CD4-positive, alpha-beta T cell (primary cell): ENCODE measurements at regions of chr9 and their contacts with region 1.

Region 1: DNA sequence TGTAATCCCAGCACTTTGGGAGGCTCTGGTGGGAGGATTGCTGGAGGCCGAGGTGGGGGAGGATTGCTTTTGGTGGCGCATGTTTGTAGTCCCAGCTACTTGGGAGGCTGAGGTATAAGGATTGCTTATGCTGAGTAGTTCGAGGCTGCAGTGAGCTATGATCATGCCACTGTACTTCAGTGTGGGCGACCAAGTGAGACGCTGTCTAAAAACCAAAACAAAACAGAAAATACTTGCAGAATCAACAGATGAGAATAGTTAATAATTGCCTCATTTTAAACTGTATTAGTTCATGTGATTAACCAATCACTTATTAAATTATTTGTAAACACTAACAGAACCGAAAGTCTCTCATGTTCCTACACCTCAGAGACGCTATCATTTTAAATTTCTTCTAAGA is 118.0 kb downstream of the CCDC171 start:
- DNase-seq: no peak
- ATAC-seq: no peak
- H3K4me3 ChIP-seq: no peak overlapping the region
- H3K4me3 Mint-ChIP-seq: no peak overlapping the region
- H3K27ac ChIP-seq: no peak overlapping the region
- H3K27ac Mint-ChIP-seq: no peak overlapping the region
- H3K4me1 ChIP-seq: no peaks in the 10 kb centered on the region
- H3K4me1 Mint-ChIP-seq: no peaks in the 10 kb centered on the region
- H3K27me3 ChIP-seq: no peaks in the 10 kb centered on the region
- H3K27me3 Mint-ChIP-seq: no peaks in the 10 kb centered on the region
- CTCF ChIP-seq: no peak

Region 2: GRCh38 chr9:15403155-15403554 is 267.7 kb before region 1 on chr9:
- CTCF ChIA-PET with region 1: no interaction called
- POLR2A ChIA-PET with region 1: no interaction called
- intact Hi-C with region 1: no loop called
- DNase-seq: peak in 3 of 14 experiments; percentile 28 to 40 (median 38)
- ATAC-seq: peak; percentile 41
- H3K4me3 ChIP-seq: no peak overlapping the region
- H3K4me3 Mint-ChIP-seq: no peak overlapping the region
- H3K27ac ChIP-seq: no peak overlapping the region
- H3K27ac Mint-ChIP-seq: no peak overlapping the region
- H3K4me1 ChIP-seq: no peaks in the 10 kb centered on the region
- H3K4me1 Mint-ChIP-seq: no peaks in the 10 kb centered on the region
- H3K27me3 ChIP-seq: no peaks in the 10 kb centered on the region
- H3K27me3 Mint-ChIP-seq: no peaks in the 10 kb centered on the region
- CTCF ChIP-seq: no peak

Region 3: GRCh38 chr9:15622318-15622971 is 48.4 kb before region 1 on chr9:
- CTCF ChIA-PET with region 1: no interaction called
- POLR2A ChIA-PET with region 1: no interaction called
- intact Hi-C with region 1: no loop called
- DNase-seq: no peak
- ATAC-seq: no peak
- H3K4me3 ChIP-seq: no peak overlapping the region
- H3K4me3 Mint-ChIP-seq: no peak overlapping the region
- H3K27ac ChIP-seq: no peak overlapping the region
- H3K27ac Mint-ChIP-seq: no peak overlapping the region
- H3K4me1 ChIP-seq: no peaks in the 10 kb centered on the region
- H3K4me1 Mint-ChIP-seq: no peaks in the 10 kb centered on the region
- H3K27me3 ChIP-seq: no peaks in the 10 kb centered on the region
- H3K27me3 Mint-ChIP-seq: no peaks in the 10 kb centered on the region
- CTCF ChIP-seq: no peak

Region 4: DNA sequence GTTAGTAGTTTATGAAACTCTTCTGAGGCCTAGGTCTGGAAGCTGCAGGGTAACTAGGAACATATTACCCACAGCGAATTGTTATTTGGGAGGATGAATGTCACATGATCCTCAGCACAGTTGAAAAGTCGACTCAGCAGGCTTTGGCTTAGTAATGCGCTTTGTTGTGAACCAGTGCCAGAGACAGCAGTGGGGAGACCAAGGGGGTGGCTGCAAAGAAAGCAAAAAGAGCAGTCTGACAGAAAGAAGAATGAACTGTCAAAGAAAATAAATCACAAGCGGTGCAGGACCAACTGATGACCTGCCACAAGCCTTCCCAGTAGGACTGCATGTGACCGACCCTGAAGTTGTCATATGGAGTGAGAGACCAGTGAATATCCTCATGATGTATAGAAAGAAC is 52.0 kb after region 1 on chr9:
- CTCF ChIA-PET with region 1: no interaction called
- POLR2A ChIA-PET with region 1: no interaction called
- intact Hi-C with region 1: loop called in 1 of 2 experiments (anchors 10 kb)
- DNase-seq: no peak
- ATAC-seq: no peak
- H3K4me3 ChIP-seq: no peak overlapping the region
- H3K4me3 Mint-ChIP-seq: no peak overlapping the region
- H3K27ac ChIP-seq: no peak overlapping the region
- H3K27ac Mint-ChIP-seq: no peak overlapping the region
- H3K4me1 ChIP-seq: no peaks in the 10 kb centered on the region
- H3K4me1 Mint-ChIP-seq: no peaks in the 10 kb centered on the region
- H3K27me3 ChIP-seq: no peaks in the 10 kb centered on the region
- H3K27me3 Mint-ChIP-seq: no peaks in the 10 kb centered on the region
- CTCF ChIP-seq: no peak